ENCODE measurements at regions of chr3 and their contacts with region 1.

Region 1: DNA sequence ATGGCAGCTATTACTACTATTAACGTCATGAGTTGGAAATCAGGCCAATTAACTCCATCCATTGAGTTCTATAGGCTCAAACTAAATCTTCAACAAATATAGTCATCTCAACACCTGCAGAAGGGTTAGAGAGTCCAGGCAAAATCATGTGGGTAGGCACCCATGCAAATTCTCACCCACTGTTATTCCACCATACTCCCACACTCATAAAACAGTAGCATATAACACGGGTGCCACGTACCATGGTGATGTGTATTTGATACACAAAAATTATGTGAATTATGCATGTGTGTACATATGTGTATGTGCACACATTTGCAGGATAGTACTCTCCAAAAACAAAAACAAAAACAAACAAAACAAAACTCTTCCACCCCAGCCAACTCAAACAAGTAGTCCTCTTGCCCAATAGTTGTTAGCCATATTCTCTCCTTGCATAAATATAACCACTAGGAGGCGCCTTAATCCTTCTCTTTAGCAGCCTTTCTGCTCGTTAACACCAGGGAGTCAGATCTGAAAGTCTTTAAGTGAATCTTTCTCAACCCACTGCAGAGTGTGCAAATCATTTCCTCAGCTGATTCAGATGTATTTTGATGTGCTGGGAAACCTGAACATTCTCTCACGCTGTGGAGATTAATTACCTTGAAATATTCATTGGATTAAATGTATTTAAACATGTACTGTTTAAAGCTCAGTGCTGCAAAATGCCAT is 38.0 kb upstream of the COPB2 start:
- DNase-seq: no peak
- ATAC-seq: peak; percentile 94 to 99 (median 98)
- H3K4me3 ChIP-seq: no peak overlapping the region
- H3K27ac ChIP-seq: no peak overlapping the region
- H3K4me1 ChIP-seq: no peaks in the 10 kb centered on the region
- H3K27me3 ChIP-seq: no peaks in the 10 kb centered on the region
- CTCF ChIP-seq: peak; percentile 84 to 94 (median 91)
- POLR2A ChIP-seq: no peak

Region 2: GRCh38 chr3:139202226-139202958 is 225.0 kb before region 1 on chr3:
- intact Hi-C with region 1: no loop called
- DNase-seq: peak in 1 of 3 donors; percentile 48
- ATAC-seq: peak; percentile 39 to 78 (median 60)
- H3K4me3 ChIP-seq: no peak overlapping the region
- H3K27ac ChIP-seq: no peak overlapping the region
- H3K4me1 ChIP-seq: peaks cover 0 to 4% (median 2%) of the 10 kb centered on the region in 4 donors
- H3K27me3 ChIP-seq: no peaks in the 10 kb centered on the region
- CTCF ChIP-seq: peak in 2 of 4 donors; percentile 12 to 21
- POLR2A ChIP-seq: no peak

Region 3: GRCh38 chr3:139561959-139562676 is 134.7 kb after region 1 on chr3:
- intact Hi-C with region 1: loop called (anchors 5 to 10 kb)
- DNase-seq: peak in 1 of 3 donors; percentile 45
- ATAC-seq: peak; percentile 76 to 97 (median 88)
- H3K4me3 ChIP-seq: no peak overlapping the region
- H3K27ac ChIP-seq: no peak overlapping the region
- H3K4me1 ChIP-seq: no peaks in the 10 kb centered on the region
- H3K27me3 ChIP-seq: no peaks in the 10 kb centered on the region
- CTCF ChIP-seq: peak; percentile 55 to 90 (median 65)
- POLR2A ChIP-seq: no peak